Activated CD8-positive, alpha-beta T cell treated with anti-CD3 and anti-CD28 coated beads for 36 hours (primary cell): ENCODE measurements at regions of chr2 and their contacts with region 1.

Region 1: DNA sequence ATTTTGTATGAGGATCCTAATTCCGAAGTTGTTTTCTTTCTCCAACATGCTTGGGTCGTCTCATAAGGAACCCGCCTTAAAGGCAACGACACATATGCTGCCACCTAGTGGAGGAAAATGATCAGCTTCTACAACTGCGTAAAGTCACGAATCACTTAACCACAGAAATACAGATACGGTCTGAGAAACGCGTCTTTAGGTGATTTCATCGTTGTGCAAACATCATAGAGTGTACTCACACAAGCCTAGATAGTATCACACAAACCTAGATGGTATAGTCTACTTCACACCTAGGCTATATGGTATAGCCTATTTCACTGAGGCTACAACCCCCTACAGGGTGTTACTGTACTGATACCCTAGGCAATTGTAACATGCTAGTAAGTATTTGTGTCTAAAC is 13.1 kb downstream of the GNLY start:
- DNase-seq: peak; percentile 82
- ATAC-seq: peak; percentile 91
- H3K4me3 Mint-ChIP-seq: no peak overlapping the region
- H3K27ac Mint-ChIP-seq: no peak overlapping the region
- H3K4me1 Mint-ChIP-seq: peaks cover 24% of the 10 kb centered on the region
- H3K27me3 Mint-ChIP-seq: peaks cover 3% of the 10 kb centered on the region
- CTCF ChIP-seq: peak; percentile 79

Region 2: GRCh38 chr2:85390941-85391669 is 316.2 kb before region 1 on chr2:
- CTCF ChIA-PET with region 1: no interaction called
- POLR2A ChIA-PET with region 1: no interaction called
- intact Hi-C with region 1: no loop called
- DNase-seq: peak; percentile 85
- ATAC-seq: peak; percentile 88
- H3K4me3 Mint-ChIP-seq: no peak overlapping the region
- H3K27ac Mint-ChIP-seq: no peak overlapping the region
- H3K4me1 Mint-ChIP-seq: peaks cover 3% of the 10 kb centered on the region
- H3K27me3 Mint-ChIP-seq: no peaks in the 10 kb centered on the region
- CTCF ChIP-seq: peak; percentile 67

Region 3: DNA sequence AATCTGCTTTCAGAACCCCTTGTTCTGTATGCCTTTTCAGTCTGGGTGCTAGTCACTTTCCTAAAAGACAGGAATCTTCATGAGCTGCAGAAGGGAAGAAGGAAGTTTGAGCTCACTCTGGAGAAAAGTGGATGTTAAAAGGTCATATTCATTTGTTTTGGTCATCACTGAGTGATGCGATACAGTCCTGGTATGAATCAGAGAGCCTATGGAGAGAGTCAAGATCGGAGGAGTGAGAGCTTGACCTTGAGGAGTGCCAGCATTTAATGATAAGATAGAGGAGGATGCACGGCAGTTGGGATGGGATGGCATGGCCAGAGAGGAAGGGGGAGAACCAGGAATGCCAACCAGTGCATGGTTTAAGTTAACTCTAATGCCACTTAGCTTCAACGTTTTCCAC is 71.7 kb before region 1 on chr2:
- CTCF ChIA-PET with region 1: interaction called, 74 read pairs
- POLR2A ChIA-PET with region 1: no interaction called
- intact Hi-C with region 1: no loop called
- DNase-seq: no peak
- ATAC-seq: no peak
- H3K4me3 Mint-ChIP-seq: no peak overlapping the region
- H3K27ac Mint-ChIP-seq: no peak overlapping the region
- H3K4me1 Mint-ChIP-seq: peaks cover 11% of the 10 kb centered on the region
- H3K27me3 Mint-ChIP-seq: no peaks in the 10 kb centered on the region
- CTCF ChIP-seq: no peak

Region 4: GRCh38 chr2:85678794-85679672 is 28.3 kb before region 1 on chr2:
- CTCF ChIA-PET with region 1: interaction called, 134 read pairs
- POLR2A ChIA-PET with region 1: no interaction called
- intact Hi-C with region 1: loop called (anchors 2 kb)
- DNase-seq: peak; percentile 79
- ATAC-seq: peak; percentile 97
- H3K4me3 Mint-ChIP-seq: no peak overlapping the region
- H3K27ac Mint-ChIP-seq: no peak overlapping the region
- H3K4me1 Mint-ChIP-seq: peaks cover 15% of the 10 kb centered on the region
- H3K27me3 Mint-ChIP-seq: peaks cover 2% of the 10 kb centered on the region
- CTCF ChIP-seq: peak; percentile 97

Region 5: GRCh38 chr2:85694052-85695025 is 13.0 kb before region 1 on chr2 and contains the start of gene GNLY:
- CTCF ChIA-PET with region 1: interaction called, 27 read pairs
- POLR2A ChIA-PET with region 1: interaction called, 3 read pairs
- intact Hi-C with region 1: no loop called
- DNase-seq: peak; percentile 33
- ATAC-seq: peak; percentile 52
- H3K4me3 Mint-ChIP-seq: peak within 1 kb of the TSS; percentile 43
- H3K27ac Mint-ChIP-seq: peak within 1 kb of the TSS; percentile 43
- H3K4me1 Mint-ChIP-seq: peaks cover 11% of the 10 kb centered on the region
- H3K27me3 Mint-ChIP-seq: peaks cover 2% of the 10 kb centered on the region
- CTCF ChIP-seq: no peak
- total RNA-seq, gene GNLY: 46.7 to 52.6 TPM

Region 6: DNA sequence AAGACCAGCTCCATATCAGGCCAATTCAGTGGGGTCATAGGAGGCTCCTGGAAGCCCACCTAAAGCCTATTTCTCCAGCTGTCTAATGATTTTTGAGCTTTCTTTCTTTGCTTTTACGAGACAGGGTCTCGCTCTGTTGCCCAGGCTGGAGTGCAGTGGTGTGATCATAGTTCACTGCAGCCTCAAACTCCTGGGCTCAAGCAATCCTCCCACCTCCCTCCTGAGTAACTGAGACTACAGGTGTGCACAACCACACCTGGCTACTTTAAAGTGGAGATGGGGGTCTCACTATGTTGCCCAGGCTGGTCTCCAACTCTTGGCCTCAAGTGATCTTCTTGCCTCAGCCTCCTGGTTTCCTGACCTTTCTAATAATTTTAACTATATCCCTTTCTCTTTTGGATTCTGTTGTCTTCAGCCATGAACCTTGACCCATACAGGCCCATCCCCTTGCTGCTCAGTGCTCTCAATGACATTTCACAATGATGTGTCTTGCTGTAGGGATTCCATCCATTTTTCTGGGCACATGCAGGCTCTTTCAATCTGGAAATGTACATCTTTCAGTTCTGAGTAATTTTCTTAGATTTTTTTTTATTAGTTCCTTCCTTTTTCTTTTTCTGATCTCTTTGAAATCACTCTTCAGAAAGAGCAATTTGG is 16.5 kb after region 1 on chr2:
- CTCF ChIA-PET with region 1: interaction called, 23 read pairs
- POLR2A ChIA-PET with region 1: interaction called, 4 read pairs
- intact Hi-C with region 1: no loop called
- DNase-seq: no peak
- ATAC-seq: no peak
- H3K4me3 Mint-ChIP-seq: no peak overlapping the region
- H3K27ac Mint-ChIP-seq: no peak overlapping the region
- H3K4me1 Mint-ChIP-seq: no peaks in the 10 kb centered on the region
- H3K27me3 Mint-ChIP-seq: peaks cover 6% of the 10 kb centered on the region
- CTCF ChIP-seq: no peak

Region 7: DNA sequence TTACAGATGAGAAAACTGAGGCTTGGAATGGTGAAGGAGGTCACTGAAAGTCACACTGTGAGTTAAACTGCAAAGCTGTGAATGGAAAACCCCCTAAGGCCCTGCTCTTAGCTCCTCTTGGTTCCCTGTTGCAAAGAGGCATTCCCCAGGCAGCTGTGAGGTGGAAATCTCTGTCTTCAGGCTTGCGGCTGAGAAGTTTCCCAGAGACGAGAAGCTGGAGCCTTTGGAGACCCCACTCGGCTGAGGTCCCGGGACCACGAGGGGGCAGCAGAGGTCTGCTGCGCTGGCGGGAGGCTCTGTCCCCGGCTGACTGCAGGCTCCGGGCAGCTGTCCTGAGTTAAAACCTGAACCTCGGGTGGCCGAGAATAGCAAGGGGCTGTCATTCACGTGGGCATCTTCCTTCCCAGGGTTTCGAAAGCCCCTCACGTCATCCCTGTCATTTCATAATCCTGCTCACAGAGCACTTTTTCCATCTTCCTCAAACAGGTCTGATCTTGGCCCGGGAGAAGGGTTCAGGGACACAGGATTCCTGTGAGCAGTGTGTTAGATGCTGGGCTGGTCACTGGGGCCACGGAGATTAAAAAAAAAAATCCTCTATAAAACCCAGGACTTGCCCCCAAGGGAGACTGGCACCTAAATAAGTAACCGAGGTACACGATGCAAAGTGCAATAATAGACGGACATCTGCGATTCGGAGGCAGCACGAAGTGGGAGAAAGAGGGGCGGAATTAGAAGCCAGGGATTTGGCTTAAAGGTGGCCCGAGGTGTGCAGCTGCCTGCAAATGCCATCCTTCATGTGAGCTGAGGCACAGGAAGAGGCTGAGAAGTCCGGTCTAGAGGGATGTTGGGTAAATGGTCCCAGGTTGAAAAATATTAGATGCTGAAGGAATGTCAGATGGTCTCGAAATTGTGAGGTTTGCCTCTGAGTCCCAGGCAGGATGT is 21.9 kb after region 1 on chr2:
- CTCF ChIA-PET with region 1: interaction called, 23 read pairs
- POLR2A ChIA-PET with region 1: no interaction called
- intact Hi-C with region 1: no loop called
- DNase-seq: peak; percentile 82
- ATAC-seq: peak; percentile 96
- H3K4me3 Mint-ChIP-seq: no peak overlapping the region
- H3K27ac Mint-ChIP-seq: no peak overlapping the region
- H3K4me1 Mint-ChIP-seq: no peaks in the 10 kb centered on the region
- H3K27me3 Mint-ChIP-seq: peaks cover 7% of the 10 kb centered on the region
- CTCF ChIP-seq: peak; percentile 87

Region 8: GRCh38 chr2:85804583-85804982 is 97.3 kb after region 1 on chr2:
- CTCF ChIA-PET with region 1: no interaction called
- POLR2A ChIA-PET with region 1: no interaction called
- intact Hi-C with region 1: no loop called
- DNase-seq: peak; percentile 57
- ATAC-seq: peak; percentile 78
- H3K4me3 Mint-ChIP-seq: no peak overlapping the region
- H3K27ac Mint-ChIP-seq: no peak overlapping the region
- H3K4me1 Mint-ChIP-seq: peaks cover 12% of the 10 kb centered on the region
- H3K27me3 Mint-ChIP-seq: no peaks in the 10 kb centered on the region
- CTCF ChIP-seq: peak; percentile 67